ENCODE measurements at regions of chr16 and their contacts with region 1.

Region 1: DNA sequence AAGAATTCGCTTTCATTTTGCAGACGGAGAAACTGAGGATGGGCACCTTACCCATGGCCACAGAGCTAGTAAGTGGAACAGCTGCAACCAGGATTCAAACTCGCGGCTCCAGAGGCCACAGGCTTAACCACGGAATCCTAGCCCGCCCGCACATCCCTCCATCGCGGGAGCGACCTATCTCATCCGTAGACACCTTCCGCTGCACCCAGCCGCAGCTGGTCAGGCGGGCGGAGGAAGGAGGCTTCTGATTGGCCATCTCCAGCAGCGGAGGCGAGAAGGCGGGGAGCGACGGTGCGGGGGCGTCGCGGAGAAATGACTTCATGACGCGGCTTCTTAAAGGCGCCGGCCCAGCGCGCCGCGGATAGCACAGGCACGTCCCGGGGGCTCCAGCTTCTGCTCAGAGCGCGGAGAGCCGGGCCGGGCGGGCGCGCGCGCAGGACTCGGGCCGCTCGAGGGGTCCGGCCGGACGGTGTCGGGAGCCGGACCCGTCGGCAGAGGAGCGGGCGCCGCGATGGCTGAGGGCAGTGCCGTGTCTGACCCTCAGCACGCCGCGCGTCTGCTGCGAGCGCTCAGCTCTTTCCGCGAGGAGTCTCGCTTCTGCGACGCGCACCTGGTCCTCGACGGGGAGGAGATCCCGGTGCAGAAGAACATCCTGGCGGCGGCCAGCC is at the start of gene GAN:
- DNase-seq: peak; percentile 93 to 96 (median 94)
- H3K4me3 ChIP-seq: peak within 1 kb of the TSS; percentile 80
- H3K27ac ChIP-seq: peak within 1 kb of the TSS; percentile 82 to 86
- H3K4me1 ChIP-seq: peaks cover 7% of the 10 kb centered on the region
- H3K27me3 ChIP-seq: no peaks in the 10 kb centered on the region
- CTCF ChIP-seq: peak in 1 of 3 donors; percentile 19
- EP300 ChIP-seq: peak; percentile 6
- POLR2A ChIP-seq: peak; percentile 87
- total RNA-seq, gene GAN: 4.5 to 11.5 (median 10.1) TPM

Region 2: DNA sequence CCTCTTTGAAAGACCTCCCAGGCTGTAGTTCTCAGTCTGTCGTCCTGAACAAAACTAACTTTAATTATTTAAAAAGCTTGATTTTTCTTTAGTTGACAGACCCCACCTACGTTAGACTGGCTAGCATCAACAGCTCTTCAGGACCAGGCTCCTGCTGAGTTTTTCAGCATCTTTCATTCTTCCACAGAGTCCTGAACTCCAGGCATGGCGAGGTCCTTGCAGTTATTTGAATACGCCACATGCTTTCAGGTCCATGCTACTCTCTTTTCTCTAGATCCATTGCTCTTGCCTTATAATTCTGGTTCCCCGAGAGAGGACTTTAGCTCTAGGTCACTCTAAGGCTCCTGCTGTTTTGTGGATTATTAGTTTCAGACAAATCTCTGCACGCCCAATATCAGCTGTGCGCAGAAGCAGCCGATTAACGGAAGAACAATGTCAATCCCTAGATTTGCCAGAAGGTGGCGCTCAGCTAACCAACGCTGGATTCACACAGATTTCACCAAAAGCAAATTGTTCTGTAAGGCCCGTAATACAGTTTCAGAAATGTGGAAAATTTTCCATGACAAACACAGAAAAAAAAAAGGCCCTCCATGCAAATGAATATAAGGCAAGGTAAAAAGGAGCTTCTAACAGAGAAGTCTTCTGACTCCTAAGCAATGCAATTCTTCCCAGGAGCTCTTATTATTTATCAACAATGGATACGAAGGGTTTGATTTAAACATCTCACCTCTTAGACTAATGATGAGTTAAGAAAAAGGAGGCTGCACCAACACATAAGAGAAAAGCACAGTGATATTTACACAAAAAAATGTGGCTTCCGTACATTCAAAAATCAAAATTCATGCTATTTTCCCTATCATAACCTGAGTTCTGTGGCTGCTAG is 109.7 kb before region 1 on chr16:
- intact Hi-C with region 1: loop called in 1 of 4 experiments (anchors 10 kb)
- DNase-seq: peak in 3 of 5 donors; percentile 38 to 66 (median 60)
- H3K4me3 ChIP-seq: no peak overlapping the region
- H3K27ac ChIP-seq: no peak overlapping the region
- H3K4me1 ChIP-seq: no peaks in the 10 kb centered on the region
- H3K27me3 ChIP-seq: no peaks in the 10 kb centered on the region
- CTCF ChIP-seq: peak; percentile 31 to 71 (median 60)
- EP300 ChIP-seq: no peak
- POLR2A ChIP-seq: no peak

Region 3: DNA sequence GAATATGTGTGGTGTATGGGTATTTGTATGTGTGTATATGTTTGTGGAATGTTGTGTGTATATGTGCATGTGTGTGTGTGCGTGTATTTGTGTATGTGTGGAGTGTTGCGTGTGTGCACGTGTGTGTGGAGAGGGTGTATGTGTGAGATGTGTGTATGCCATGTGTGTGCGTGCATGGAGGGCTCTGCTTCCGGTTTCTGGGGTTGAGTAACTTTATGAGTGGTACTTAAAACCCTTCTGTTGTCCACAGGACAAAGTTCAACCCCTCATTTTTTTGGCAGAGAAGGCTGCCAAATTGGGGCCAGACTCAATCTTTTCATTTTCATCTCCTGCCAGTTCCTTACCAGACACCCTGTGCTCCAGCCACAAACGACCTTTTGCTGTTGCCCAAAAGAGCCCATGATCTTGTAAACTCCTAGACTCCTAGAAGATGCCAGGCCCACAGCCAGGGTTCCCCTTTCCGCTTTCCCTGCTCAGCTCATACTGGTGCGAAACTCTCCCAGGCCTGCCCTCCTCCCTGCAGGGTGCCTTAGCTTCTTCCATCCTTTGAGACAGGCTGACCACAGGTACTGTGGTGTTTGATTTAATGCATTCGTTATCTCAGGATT is 230.0 kb after region 1 on chr16:
- intact Hi-C with region 1: no loop called
- DNase-seq: no peak
- H3K4me3 ChIP-seq: no peak overlapping the region
- H3K27ac ChIP-seq: no peak overlapping the region
- H3K4me1 ChIP-seq: peaks cover 20% of the 10 kb centered on the region
- H3K27me3 ChIP-seq: no peaks in the 10 kb centered on the region
- CTCF ChIP-seq: no peak
- EP300 ChIP-seq: no peak
- POLR2A ChIP-seq: no peak